Adrenal gland (tissue), 19 donors: ENCODE measurements at regions of chr7 and their contacts with region 1.

Region 1: GRCh38 chr7:27235387-27236311 is 7.0 kb upstream of the EVX1 start:
- DNase-seq: peak in 6 of 7 donors; percentile 52 to 77 (median 64)
- H3K4me3 ChIP-seq: peak overlapping the region in 2 of 4 donors; percentile 16 to 58
- H3K27ac ChIP-seq: no peak overlapping the region
- H3K4me1 ChIP-seq: peaks cover 0 to 18% of the 10 kb centered on the region in 2 donors
- H3K27me3 ChIP-seq: peaks cover 30% of the 10 kb centered on the region
- CTCF ChIP-seq: peak; percentile 22 to 57 (median 47)
- POLR2A ChIP-seq: no peak

Region 2: DNA sequence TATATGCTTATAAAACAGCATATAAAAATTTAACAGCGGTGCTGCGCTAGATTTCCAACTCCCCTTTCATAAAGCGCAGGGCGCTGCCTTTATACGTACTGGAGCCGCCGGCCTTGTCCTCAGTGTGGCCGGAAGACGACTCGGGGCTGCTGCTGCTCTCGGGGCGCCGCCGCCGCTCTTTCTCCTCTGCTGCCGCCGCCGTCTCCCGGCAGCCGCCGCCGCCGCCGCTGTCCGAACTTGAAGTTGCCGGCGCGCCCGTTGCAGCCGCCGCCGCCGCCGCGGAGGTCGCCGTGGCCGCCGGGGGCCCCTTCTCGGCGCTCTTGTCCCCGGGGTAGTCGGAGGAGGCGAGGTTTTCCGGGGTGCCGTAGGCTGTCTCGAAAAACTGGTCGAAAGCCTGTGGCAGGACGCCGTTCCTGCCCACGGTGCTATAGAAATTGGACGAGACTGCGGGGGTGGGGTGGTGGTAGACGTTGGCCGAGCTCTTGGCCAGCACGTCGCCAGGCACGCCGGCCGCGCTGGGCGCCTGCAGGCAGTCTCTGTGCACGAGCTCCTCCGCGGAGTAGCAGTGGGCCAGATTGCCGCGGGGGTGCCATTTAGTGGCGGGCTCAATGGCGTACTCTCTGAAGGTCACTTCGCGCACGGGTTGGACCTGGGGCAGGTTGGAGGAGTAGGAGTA is 51.2 kb before region 1 on chr7:
- intact Hi-C with region 1: no loop called
- DNase-seq: peak; percentile 20 to 58 (median 37)
- H3K4me3 ChIP-seq: peak overlapping the region in 1 of 4 donors; percentile 42
- H3K27ac ChIP-seq: no peak overlapping the region
- H3K4me1 ChIP-seq: peaks cover 17 to 33% of the 10 kb centered on the region in 2 donors
- H3K27me3 ChIP-seq: peaks cover 98% of the 10 kb centered on the region
- CTCF ChIP-seq: no peak
- POLR2A ChIP-seq: no peak

Region 3: GRCh38 chr7:27576360-27576944 is 340.8 kb after region 1 on chr7:
- intact Hi-C with region 1: loop called in 1 of 2 experiments (anchors 10 kb)
- DNase-seq: no peak
- H3K4me3 ChIP-seq: no peak overlapping the region
- H3K27ac ChIP-seq: no peak overlapping the region
- H3K4me1 ChIP-seq: no peaks in the 10 kb centered on the region
- H3K27me3 ChIP-seq: no peaks in the 10 kb centered on the region
- CTCF ChIP-seq: peak; percentile 36 to 76 (median 60)
- POLR2A ChIP-seq: no peak